ENCODE measurements at regions of chr5 and their contacts with region 1.

Region 1: DNA sequence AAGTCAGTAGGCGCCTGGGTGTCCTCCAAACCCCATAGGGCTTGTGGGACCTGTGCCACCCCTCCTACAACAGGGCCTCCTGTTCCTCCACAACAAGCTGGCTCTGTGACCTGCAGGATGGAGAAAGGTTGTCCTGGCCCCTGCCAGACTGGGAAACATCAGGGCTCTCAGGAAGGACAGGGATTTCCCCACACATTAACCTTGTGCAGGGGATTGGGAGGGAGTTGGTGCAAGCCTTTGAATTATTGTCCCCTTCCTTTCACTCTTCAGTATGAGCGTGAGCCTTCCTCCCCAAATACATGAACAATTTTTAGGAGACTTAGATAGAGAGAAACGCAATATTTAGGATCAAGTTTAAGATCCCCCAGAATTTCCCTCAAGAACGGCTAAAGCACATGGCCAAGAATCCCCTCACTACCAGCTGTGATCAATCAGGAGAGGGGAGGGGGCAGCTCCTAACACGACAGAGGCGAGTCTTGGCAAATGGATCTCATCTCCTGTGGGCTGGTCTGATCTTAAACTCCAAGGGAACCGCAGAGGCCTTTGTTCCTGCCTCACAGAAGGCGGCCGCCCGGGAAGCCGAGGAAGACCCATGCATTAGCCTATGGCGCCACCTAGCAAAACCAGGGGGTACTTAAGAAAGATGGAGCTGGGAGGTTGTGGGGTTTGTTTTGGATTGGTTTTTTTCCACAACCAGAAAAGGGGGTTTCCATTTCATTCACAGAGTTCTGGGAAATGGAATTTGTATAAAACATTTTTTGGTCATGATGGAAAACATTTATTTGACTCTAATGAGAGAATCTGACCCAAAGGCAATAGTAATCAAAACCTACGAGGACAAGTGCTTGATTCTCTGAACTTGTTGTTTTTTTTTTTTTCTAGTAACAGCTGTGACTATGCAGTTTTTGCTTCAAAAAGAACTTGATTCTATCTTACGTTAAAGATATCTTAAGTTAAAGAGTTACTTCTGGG is 36.1 kb upstream of the OSMR start:
- DNase-seq: peak; percentile 78 to 95 (median 86)

Region 2: DNA sequence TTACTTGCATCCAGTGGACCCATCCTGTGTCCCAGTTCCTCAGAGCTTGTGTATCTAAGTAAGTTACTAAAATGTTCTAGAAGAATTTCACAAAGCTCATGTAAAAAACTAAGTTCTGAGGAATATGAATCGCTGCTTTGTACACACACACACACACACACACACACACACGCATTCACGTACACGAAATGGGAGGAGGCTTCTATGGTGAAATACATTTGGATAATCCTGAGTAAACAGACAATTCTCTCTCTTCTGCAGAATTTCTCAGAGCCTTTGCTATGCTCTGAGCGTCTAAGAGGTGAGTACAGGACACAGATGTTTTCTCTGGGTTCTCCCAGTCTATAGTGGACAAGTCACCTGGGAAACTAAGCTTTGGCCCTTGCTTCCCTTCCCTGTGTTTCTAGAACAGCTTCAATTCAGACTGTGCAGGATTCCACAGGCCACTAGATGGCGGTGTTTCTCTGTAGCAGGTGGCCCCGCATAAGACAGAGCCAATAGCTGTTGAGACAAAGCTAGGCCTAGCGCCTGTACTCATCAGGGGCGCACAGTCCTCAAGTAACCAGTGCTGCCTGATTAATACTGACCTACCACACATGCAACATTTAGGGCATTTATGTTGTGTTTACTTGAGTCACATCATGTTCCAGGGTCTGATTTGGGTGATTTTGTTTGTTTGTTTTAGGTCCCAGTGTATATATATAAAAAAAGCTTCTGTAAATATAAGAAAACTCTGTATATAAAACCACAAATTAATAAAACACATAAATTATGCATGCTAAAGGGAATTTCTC is 368.0 kb before region 1 on chr5:
- intact Hi-C with region 1: loop called (anchors 5 kb)
- DNase-seq: peak; percentile 74 to 98 (median 93)

Region 3: DNA sequence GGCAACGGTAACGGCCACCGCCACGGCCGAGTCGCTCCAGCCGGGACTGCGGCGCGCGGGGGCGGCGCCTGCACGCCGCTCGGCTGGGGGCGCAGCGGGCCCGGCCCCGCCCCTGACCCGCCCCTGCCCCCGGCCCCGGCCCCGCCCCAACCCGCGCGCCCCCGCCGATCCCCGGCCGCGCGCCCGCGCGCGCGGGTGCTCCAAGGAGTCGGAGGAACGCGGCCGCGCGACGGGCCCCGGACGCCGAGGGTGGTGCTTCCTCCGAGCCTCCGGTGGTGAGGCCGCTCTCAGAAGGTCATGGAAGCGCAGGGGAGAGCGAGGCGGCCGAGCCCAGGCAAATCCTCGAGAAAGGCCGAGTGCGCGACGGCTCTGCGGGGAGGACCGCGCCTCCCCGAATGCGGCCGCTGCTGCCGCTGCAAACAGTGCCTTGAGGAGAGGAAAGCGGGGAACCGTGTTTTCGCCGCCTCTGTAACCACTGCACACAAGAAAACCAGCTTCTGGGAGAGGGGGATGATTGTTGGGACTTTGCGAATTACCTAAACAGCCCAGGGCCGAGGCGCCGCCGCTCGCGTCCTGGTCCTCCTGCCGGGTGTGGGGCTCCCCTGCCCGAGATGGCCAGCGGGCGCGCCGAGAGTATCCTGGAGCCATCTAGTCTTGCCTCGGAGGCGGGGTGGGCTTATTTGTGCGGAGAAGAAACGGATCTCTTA is 252.9 kb before region 1 on chr5 and contains the start of gene LIFR:
- intact Hi-C with region 1: loop called (anchors 10 kb)
- DNase-seq: peak; percentile 64 to 95 (median 88)